Ovary (tissue), 10 donors: ENCODE measurements at regions of chr19 and their contacts with region 1.

Region 1: GRCh38 chr19:1652471-1653299 is at the start of gene TCF3:
- DNase-seq: peak; percentile 97 to 99 (median 98)
- H3K4me3 ChIP-seq: peak within 1 kb of the TSS; percentile 87
- H3K27ac ChIP-seq: peak within 1 kb of the TSS; percentile 98 to 99
- H3K4me1 ChIP-seq: peaks cover 6% of the 10 kb centered on the region
- H3K27me3 ChIP-seq: no peaks in the 10 kb centered on the region
- CTCF ChIP-seq: peak in 2 of 3 donors; percentile 31 to 57
- EP300 ChIP-seq: peak; percentile 85
- POLR2A ChIP-seq: peak; percentile 66
- total RNA-seq, gene TCF3: 28.0 to 85.3 (median 76.6) TPM

Region 2: DNA sequence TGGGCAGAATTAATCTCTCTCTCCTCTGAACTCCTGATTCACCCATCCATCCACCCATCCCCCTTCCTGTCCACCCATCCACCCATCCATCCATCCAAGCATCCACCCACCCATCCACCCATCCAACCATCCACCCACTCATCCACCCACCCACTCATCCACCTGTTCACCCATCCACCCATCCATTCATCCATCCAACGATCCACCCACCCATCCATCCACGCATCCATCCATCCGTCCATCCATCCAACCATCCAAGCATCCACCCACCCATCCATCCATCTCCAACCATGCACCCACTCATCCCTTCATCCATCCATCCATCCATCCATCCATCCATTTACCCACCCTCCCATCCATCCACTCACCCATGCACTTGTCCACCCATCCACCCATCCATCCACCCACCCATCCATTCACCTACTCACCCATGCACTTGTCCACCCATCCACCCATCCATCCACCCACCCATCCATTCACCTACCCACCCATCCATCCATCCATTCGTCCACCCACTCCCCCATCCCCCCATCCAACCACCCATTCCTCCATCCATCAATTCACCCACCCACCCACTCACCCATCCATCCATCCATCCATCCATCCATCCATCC is 103.2 kb before region 1 on chr19:
- intact Hi-C with region 1: loop called in 2 of 4 experiments (anchors 5 to 10 kb)
- DNase-seq: no peak
- H3K4me3 ChIP-seq: no peak overlapping the region
- H3K27ac ChIP-seq: no peak overlapping the region
- H3K4me1 ChIP-seq: no peaks in the 10 kb centered on the region
- H3K27me3 ChIP-seq: no peaks in the 10 kb centered on the region
- CTCF ChIP-seq: no peak
- EP300 ChIP-seq: no peak
- POLR2A ChIP-seq: no peak

Region 3: DNA sequence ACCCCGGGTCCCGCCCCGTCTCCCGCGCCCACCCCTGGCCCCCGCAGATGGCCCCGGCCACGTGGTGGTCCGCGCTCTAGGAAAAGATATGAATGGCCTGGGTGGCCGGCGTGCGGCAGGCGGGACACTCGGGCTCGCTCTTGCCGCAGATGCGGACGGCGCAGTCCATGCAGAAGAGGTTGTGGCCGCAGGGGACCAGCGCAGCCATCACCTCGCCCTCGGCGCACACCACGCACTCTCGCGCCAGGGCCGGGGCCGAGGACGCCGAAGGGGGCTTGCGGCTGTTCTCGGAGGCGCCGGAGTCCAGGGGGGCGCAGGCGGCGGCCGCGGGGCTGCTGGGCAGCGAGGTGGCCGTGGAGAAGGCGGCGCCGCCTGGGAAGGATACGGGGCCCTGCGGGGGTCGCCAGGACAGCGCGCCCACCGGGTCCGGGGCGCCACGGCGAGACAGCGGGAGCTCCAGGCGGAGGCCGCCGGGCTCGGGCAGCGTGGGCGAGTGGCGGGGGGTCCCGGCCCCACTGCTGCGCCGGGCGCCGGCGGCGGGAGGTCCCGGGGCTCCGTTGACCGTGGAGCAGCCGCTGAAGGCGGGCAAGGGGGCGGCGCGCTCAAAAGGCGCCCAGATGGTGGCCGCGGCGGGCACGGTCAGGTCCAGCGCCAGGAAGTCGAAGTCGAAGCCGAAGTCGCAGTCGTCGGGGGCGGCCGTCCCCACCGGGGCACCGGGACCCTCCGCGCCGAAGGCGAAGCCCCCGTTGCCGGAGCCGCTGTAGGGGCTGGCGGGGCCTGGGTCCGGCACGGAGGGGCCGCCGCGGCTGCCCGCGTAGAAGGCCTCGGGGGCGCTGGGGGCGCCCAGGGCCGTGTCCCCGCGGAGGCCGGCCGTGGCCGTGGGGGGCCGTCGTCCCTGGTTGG is 96.9 kb before region 1 on chr19:
- intact Hi-C with region 1: loop called in 1 of 4 experiments (anchors 10 kb)
- DNase-seq: no peak
- H3K4me3 ChIP-seq: no peak overlapping the region
- H3K27ac ChIP-seq: no peak overlapping the region
- H3K4me1 ChIP-seq: no peaks in the 10 kb centered on the region
- H3K27me3 ChIP-seq: no peaks in the 10 kb centered on the region
- CTCF ChIP-seq: no peak
- EP300 ChIP-seq: no peak
- POLR2A ChIP-seq: no peak

Region 4: DNA sequence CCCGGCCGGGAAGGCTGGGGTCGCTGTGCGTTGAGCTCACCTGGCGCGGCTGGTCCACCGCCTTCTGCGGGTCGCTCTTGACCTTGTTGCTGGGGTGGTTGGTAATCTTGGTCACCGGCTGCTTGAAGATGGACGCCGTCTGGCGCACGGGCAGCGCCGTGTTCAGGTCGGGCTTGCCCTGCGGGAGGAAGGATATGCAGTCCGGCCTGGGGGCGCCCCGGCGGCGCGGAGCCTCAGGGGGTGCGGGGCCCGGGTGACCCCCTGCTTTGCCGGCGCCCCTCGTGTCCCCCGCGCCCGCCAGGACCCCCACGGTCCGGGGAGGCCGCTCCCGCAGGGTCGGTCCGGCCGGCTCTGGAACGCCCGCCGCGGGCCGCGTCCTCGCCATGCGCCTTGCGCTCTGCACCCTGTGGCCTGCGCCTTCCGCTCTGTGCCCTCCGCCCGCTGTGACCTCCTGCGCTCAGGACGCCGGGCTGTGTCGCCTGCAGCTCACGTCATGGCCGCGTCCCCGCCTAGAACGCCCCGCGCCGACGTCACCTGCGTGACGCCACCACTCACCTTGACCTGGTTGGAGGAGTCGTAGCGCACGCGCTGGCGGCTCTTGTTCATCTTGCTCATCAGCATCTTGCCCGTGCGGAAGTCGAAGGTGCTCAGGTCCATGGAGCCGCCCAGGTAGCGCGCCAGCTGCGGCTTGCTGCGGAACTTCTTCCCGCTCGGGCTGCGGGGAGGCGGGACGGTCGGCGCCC is 68.0 kb before region 1 on chr19:
- intact Hi-C with region 1: no loop called
- DNase-seq: no peak
- H3K4me3 ChIP-seq: no peak overlapping the region
- H3K27ac ChIP-seq: no peak overlapping the region
- H3K4me1 ChIP-seq: no peaks in the 10 kb centered on the region
- H3K27me3 ChIP-seq: no peaks in the 10 kb centered on the region
- CTCF ChIP-seq: no peak
- EP300 ChIP-seq: no peak
- POLR2A ChIP-seq: no peak

Region 5: DNA sequence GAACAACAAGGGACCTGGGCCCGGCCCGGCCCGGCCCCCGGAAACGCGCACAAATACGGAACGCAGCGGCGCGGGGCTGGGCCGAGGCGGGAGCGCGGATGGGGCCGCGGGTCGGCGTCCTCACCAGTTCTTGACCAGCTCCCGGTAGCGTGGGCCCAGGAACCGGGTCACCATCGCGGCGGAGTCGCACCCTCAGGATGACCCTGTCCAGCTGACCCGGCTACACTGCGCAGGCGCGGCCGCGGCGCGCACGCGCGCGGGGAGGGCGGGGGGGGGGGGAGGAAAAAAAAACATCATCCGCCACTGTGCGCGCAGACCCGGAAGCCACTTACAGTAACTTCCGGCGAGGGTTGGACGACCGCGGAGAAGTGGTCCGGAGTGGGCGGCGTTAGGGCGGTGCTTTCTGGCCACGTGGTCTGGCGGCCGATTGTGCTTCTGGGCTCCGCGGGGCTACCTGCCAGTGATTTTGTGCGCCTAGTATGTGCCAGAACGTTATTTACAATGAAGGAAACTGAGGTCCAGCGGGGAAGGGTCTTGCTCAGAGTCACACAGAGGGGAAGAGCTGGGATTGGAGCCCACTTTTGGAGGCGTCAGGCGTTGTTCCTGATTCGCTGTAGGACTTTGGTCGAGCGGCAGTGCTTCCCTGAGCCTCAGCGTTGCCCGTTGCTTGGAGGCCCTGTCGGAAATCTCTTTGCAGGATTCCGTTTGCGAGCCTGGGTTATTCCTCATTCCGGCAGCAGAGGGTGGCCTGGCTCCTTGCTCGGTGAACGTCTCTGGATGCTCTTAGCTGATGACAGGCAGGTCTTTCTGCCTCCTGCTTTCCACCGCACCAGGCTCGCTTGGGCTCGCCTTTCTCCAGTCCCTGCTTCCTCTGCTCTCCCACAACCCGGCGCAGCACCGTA is 47.2 kb before region 1 on chr19 and contains the start of gene UQCR11:
- intact Hi-C with region 1: loop called in 3 of 4 experiments (anchors 2 to 5 kb)
- DNase-seq: peak; percentile 94 to 97 (median 95)
- H3K4me3 ChIP-seq: peak within 1 kb of the TSS; percentile 81
- H3K27ac ChIP-seq: peak within 1 kb of the TSS; percentile 37 to 77
- H3K4me1 ChIP-seq: peaks cover 17% of the 10 kb centered on the region
- H3K27me3 ChIP-seq: no peaks in the 10 kb centered on the region
- CTCF ChIP-seq: peak; percentile 2 to 72 (median 71)
- EP300 ChIP-seq: no peak
- POLR2A ChIP-seq: peak; percentile 12
- total RNA-seq, gene UQCR11: 39.5 to 132 (median 98.2) TPM

Region 6: DNA sequence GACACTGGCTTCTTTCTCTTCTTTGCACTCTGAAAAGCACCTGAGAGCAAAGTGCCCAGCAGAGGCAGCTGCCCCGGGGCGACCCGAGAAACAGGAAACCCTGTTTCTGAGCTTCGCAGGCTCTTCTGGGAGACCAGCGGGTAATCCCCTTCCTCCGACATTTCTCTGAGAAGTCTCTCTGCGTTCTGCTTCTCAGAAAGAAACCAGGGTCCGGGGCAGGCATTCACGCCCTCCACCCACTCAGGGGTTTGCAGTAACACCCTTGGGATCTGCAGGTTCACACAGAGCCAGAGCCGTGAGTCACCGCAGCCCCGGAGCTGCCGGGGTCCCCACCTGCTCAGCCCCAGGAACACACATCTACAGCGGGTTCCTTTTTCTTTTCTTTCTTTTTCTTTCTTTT is 909.2 kb after region 1 on chr19:
- intact Hi-C with region 1: no loop called
- DNase-seq: peak in 1 of 5 donors; percentile 15
- H3K4me3 ChIP-seq: no peak overlapping the region
- H3K27ac ChIP-seq: no peak overlapping the region
- H3K4me1 ChIP-seq: no peaks in the 10 kb centered on the region
- H3K27me3 ChIP-seq: no peaks in the 10 kb centered on the region
- CTCF ChIP-seq: no peak
- EP300 ChIP-seq: no peak
- POLR2A ChIP-seq: no peak